ENCODE measurements at regions of chr9 and their contacts with region 1.

Region 1: GRCh38 chr9:100411472-100412283 is 15.3 kb upstream of the MSANTD3 start:
- DNase-seq: peak; percentile 93
- ATAC-seq: peak; percentile 100
- H3K4me3 Mint-ChIP-seq: peak overlapping the region; percentile 74
- H3K27ac Mint-ChIP-seq: peak overlapping the region; percentile 72
- H3K4me1 Mint-ChIP-seq: peaks cover 19% of the 10 kb centered on the region
- H3K27me3 Mint-ChIP-seq: peaks cover 24% of the 10 kb centered on the region

Region 2: GRCh38 chr9:100426530-100427428 is 15.1 kb after region 1 on chr9 and contains the start of gene MSANTD3:
- CTCF ChIA-PET with region 1: interaction called, 11 read pairs
- DNase-seq: peak; percentile 62
- ATAC-seq: peak; percentile 87
- H3K4me3 Mint-ChIP-seq: peak within 1 kb of the TSS; percentile 84
- H3K27ac Mint-ChIP-seq: peak within 1 kb of the TSS; percentile 83
- H3K4me1 Mint-ChIP-seq: peaks cover 28% of the 10 kb centered on the region
- H3K27me3 Mint-ChIP-seq: peaks cover 13% of the 10 kb centered on the region
- total RNA-seq, gene MSANTD3: 20.5 to 20.9 TPM

Region 3: DNA sequence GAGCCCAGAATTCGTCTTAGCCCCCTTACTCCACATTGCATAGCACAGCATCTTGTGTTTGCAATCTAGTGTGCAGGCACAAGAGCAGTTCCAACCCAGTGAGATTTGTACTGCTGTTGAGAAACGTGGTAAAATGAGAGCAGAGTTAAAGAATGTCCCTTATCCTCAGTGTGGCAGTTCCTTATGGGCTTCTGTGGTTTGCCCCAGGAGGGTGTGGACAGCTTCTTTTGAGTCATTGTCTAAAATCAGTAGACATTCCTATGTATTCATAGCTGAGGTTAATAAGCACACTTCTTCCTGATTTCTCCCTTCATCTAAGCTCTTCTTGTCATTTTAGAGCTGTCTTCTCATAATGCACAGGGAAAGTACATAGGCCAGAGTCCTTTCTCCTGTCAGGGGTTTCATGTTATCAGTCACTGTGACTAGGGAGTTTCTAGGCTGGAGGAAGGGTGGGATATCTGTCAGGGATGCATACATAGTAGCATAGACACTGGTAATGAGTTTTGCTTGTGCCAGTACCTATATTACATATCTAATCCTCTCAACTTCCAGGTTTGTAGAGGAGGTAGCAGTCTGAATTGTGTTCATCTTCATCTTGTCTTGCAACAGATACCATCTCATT is 164.2 kb after region 1 on chr9:
- CTCF ChIA-PET with region 1: no interaction called
- DNase-seq: no peak
- ATAC-seq: no peak
- H3K4me3 Mint-ChIP-seq: no peak overlapping the region
- H3K27ac Mint-ChIP-seq: no peak overlapping the region
- H3K4me1 Mint-ChIP-seq: peaks cover 6% of the 10 kb centered on the region
- H3K27me3 Mint-ChIP-seq: no peaks in the 10 kb centered on the region

Measured in activated CD8-positive, alpha-beta memory T cell treated with anti-CD3 and anti-CD28 coated beads, Interleukin-2, amount 10 ng/mL, durations not matched to agents 7 days and 5 days (primary cell).